Right cardiac atrium (tissue), 5 donors: ENCODE measurements at regions of chr5 and their contacts with region 1.

Region 1: DNA sequence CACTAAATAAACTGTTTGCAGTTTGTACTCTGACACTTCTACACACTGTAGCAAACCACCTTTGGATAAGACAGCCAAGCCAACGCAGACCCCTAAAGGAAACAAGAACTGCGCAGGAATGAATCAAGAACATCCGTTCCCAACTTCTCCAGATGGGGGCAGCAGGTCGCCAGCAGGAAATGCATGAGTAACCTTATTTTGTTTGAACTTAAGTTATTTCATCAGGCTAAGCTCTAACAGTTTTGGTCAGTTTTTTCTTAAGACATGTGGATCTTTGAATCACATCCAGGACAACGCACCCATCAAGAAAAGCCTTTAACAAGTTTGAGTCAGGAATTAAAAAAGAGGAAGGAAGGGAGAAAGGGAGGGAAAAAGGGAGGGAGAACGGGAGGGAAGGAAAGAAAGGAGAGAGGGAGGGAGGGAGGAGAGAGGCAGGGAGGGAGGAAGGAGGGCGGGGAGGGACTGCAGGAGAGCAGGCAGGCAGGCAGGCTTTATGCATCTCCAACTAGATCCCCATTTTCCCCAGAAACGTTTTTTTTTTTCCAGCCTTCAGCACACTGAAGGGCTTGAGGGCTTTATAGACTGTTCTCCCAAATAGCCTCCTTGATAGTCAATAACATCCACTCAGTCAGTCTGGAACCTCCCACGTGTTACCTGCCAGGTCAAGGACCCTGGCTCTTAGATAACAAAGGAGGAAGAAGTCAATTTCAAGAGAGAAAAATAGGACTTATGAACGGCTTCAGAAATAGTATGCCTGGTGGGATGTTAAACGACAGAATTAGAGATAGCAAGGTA is 22.2 kb downstream of the BHMT start:
- DNase-seq: peak; percentile 58 to 85 (median 68)
- ATAC-seq: peak; percentile 72 to 84
- H3K4me3 ChIP-seq: peak overlapping the region; percentile 51
- H3K27ac ChIP-seq: no peak overlapping the region
- H3K4me1 ChIP-seq: no peaks in the 10 kb centered on the region
- H3K27me3 ChIP-seq: no peaks in the 10 kb centered on the region

Region 2: DNA sequence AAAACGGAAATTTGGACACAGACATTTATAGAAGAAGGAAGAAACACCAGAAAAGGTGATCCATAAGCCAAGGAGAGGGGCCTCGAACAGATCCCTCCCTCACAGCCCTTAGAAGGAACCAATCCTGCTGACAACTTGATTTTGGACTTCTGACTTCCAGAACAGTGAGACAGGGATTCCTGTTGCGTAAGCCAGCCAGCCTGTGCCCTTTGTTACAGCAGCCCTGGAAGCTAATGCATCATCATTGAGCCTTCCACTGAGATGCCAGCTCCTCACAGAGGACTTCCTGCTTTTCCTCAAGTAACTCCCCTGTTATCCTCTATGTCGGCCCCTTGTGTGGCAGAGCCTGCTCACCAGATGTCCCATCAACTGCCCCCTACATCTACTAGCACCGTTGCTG is 196.2 kb after region 1 on chr5:
- intact Hi-C with region 1: no loop called
- DNase-seq: no peak
- ATAC-seq: no peak
- H3K4me3 ChIP-seq: no peak overlapping the region
- H3K27ac ChIP-seq: no peak overlapping the region
- H3K4me1 ChIP-seq: no peaks in the 10 kb centered on the region
- H3K27me3 ChIP-seq: no peaks in the 10 kb centered on the region

Region 3: GRCh38 chr5:79464695-79465332 is 331.0 kb after region 1 on chr5:
- intact Hi-C with region 1: loop called in 1 of 4 experiments (anchors 10 kb)
- DNase-seq: no peak
- ATAC-seq: no peak
- H3K4me3 ChIP-seq: no peak overlapping the region
- H3K27ac ChIP-seq: no peak overlapping the region
- H3K4me1 ChIP-seq: no peaks in the 10 kb centered on the region
- H3K27me3 ChIP-seq: no peaks in the 10 kb centered on the region

Region 4: DNA sequence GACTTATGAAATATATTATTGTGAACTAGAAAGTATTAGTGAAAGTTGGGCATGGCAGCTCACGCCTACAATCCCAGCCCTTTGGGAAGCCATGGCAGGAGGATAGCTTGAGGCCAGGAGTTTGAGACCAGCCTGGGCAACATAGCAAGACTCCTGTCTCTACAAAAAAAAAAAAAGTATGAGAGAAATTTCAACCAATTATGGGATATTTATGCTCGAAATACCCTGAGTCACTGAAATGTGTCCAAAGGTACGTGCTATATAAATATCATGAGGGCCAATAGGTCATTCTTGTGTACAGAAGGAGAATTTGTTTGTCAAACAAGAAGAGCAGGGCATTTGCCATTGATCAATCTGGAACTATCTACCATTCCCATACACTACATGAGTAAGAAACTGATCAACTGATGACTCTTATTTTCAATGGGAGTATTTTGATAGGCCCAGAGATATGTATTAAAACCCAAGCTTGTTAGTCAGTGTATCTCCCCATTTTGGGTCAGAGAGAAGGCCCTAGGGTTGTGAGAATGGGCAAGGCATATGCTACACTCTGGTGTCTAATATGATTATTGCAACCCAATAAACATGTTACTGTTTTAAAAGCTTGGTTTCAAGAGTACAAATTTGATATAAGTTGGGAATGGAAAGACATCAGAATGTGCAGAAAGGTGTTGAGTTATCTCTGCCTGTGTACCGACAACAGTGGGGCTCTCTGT is 401.8 kb after region 1 on chr5:
- intact Hi-C with region 1: loop called in 1 of 4 experiments (anchors 10 kb)
- DNase-seq: no peak
- ATAC-seq: peak in 1 of 2 donors; percentile 48
- H3K4me3 ChIP-seq: no peak overlapping the region
- H3K27ac ChIP-seq: no peak overlapping the region
- H3K4me1 ChIP-seq: no peaks in the 10 kb centered on the region
- H3K27me3 ChIP-seq: peaks cover 2% of the 10 kb centered on the region